MCF 10A (cell line): ENCODE measurements at regions of chr5 and their contacts with region 1.

Region 1: DNA sequence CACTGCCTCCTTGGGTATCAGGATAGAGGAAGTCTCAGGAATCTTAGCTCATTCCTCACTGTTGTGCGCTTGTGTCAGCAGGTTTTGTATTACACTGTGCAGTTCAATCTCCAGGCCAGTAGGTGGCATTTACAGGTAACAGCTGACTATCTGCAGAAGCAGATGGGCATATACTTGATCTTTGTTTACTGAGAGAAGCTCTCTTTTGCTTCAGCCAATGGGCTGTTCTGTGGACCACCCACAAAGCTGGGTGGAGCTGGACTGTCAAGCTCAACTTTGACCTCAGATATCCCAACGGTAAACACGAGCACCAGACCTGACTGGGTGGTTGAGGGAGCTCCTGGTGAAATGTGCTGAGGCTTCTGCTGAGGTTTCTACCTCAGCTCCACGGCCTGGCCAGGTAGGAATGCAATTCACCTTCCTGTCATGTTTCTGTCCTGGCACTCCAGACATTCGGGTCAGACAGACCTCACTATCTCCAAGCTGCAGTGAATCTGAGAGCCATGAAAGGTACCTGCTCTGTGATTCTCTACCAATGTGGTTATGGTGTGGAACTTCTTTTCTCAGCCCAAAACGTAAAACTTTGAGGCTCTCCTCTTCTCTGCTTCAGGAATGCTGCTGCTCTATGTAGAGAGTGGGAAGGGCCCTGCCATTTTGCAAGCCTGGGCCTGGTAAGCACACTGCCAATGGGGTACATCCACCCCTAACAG is 167.9 kb upstream of the ACTBL2 start:
- DNase-seq: peak; percentile 77
- H3K4me3 Mint-ChIP-seq: no peak overlapping the region
- H3K27ac Mint-ChIP-seq: no peak overlapping the region
- H3K4me1 Mint-ChIP-seq: no peaks in the 10 kb centered on the region
- H3K27me3 Mint-ChIP-seq: no peaks in the 10 kb centered on the region
- CTCF ChIP-seq: peak; percentile 75

Region 2: DNA sequence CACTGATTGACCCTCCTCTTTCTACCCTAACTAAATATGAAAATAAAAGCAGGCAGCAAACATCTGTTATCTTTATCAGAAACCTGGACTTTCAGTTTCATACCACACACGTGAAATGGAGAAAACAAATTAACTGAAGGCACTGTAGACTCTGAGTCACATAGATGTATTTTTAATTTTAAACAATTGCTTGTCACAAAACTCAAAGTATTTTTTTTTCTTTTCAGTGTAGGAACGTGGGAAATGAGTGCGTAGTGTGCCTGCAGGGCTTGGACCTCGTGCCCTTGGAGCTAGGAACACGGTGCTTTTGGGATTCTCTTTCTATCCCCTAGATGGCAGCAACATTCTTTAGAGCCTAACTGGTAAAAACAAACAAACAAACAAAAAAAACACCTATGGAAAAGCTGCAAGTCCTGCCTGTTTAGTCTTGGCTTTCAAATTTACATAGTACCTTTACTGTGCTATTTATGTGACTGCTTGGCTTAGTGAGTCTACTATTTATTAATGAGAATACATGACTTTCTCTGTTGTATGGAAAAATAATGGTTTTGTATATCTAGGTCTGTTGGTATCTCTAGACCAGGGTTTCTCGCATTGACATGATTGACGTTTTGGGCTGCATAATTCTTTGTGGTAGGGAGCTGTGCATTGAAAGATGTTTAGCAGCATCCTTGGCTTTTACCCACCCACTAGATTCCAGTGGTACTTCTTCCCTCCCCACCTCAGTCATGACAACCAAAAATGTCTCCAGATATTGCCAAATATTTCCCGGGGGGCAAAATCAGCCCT is 151.1 kb before region 1 on chr5:
- CTCF ChIA-PET with region 1: interaction called, 31 read pairs
- POLR2A ChIA-PET with region 1: no interaction called
- intact Hi-C with region 1: loop called (anchors 1 kb)
- DNase-seq: peak; percentile 69
- H3K4me3 Mint-ChIP-seq: peak overlapping the region; percentile 53
- H3K27ac Mint-ChIP-seq: no peak overlapping the region
- H3K4me1 Mint-ChIP-seq: peaks cover 21% of the 10 kb centered on the region
- H3K27me3 Mint-ChIP-seq: no peaks in the 10 kb centered on the region
- CTCF ChIP-seq: peak; percentile 63

Region 3: DNA sequence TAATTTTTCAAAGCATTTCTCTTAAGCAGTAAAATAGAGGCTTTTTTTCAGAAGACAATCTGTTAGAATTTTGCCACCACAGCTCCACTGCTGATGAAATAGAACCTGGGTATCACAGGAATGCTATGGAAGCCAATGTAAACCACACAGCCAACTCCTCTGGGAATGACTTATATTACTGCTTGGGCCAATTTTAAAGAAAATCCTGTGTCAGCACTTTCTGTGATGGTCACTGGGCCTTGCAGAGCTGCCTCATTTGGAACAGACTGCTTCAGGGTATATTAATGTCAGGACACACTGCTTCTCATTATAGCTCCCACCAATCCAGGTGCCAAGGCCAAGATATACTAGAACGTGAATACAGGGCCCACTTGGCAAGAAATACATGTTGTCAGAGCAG is 23.8 kb before region 1 on chr5:
- CTCF ChIA-PET with region 1: interaction called, 15 read pairs
- POLR2A ChIA-PET with region 1: no interaction called
- intact Hi-C with region 1: no loop called
- DNase-seq: peak; percentile 4
- H3K4me3 Mint-ChIP-seq: no peak overlapping the region
- H3K27ac Mint-ChIP-seq: no peak overlapping the region
- H3K4me1 Mint-ChIP-seq: no peaks in the 10 kb centered on the region
- H3K27me3 Mint-ChIP-seq: peaks cover 14% of the 10 kb centered on the region
- CTCF ChIP-seq: no peak

Region 4: GRCh38 chr5:57676222-57677098 is 25.9 kb after region 1 on chr5:
- CTCF ChIA-PET with region 1: interaction called, 15 read pairs
- POLR2A ChIA-PET with region 1: no interaction called
- intact Hi-C with region 1: no loop called
- DNase-seq: peak; percentile 36
- H3K4me3 Mint-ChIP-seq: no peak overlapping the region
- H3K27ac Mint-ChIP-seq: no peak overlapping the region
- H3K4me1 Mint-ChIP-seq: peaks cover 7% of the 10 kb centered on the region
- H3K27me3 Mint-ChIP-seq: no peaks in the 10 kb centered on the region
- CTCF ChIP-seq: no peak

Region 5: DNA sequence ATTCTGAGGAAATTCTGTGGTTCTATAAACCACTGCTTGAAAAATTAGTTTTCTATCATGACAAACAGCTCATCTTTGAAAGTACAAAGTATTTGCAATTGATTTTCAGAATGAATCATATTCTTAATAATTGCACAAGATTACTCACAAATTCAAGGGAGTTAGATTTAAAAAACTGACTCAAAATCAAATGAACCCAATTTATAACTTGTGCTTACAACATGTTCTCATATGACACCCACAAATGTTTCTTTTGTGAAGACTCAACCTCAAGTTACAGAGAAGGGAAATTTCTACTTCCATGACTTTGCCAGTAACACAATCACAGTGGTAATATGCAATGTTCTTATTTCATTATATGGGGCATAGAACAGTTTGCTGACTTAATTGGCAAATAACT is 104.1 kb after region 1 on chr5:
- CTCF ChIA-PET with region 1: interaction called, 7 read pairs
- POLR2A ChIA-PET with region 1: interaction called, 4 read pairs
- intact Hi-C with region 1: loop called (anchors 5 kb)
- DNase-seq: peak; percentile 18
- H3K4me3 Mint-ChIP-seq: no peak overlapping the region
- H3K27ac Mint-ChIP-seq: peak overlapping the region; percentile 14
- H3K4me1 Mint-ChIP-seq: peaks cover 14% of the 10 kb centered on the region
- H3K27me3 Mint-ChIP-seq: no peaks in the 10 kb centered on the region
- CTCF ChIP-seq: no peak

Region 6: DNA sequence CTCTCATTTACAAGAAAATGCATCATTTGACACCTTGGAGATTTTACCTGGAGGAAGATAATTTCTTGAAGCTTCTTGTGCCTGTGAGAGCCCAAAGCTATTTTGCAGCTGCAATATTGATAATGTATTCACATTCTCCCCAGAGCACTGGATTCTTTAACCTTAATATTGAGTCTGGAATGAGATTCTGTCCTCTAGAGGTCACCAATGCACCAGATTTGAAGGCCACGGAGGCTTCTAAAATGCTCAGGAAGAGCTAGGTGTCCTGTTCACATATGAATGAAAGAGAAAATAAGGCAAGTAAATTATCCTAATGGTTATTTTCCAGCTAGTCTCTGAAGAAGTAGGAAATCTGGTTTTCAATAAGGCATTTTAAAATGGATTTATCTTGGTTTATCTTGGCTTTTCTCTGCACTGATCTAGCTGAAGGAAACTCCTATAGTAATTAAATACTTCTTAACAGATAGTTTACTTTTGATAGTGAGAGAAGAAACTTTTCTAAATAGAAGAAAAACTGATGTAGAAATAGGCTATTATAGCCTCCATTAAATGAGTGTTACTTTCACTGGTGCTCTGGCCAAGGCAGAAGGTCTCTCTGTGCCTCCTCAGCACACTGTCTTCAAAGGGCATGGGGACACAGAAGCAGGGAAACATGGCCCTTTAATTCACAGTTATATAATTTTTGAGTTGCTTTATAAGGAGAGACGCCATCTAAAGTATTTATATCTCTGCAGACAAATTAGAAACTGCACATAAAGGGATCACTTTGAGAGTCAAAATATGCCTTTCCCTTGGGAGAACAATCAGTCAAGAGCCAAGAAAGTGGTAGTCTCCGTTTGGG is 129.1 kb after region 1 on chr5:
- CTCF ChIA-PET with region 1: interaction called, 68 read pairs
- POLR2A ChIA-PET with region 1: interaction called, 13 read pairs
- intact Hi-C with region 1: loop called (anchors 1 kb)
- DNase-seq: peak; percentile 78
- H3K4me3 Mint-ChIP-seq: no peak overlapping the region
- H3K27ac Mint-ChIP-seq: no peak overlapping the region
- H3K4me1 Mint-ChIP-seq: peaks cover 6% of the 10 kb centered on the region
- H3K27me3 Mint-ChIP-seq: no peaks in the 10 kb centered on the region
- CTCF ChIP-seq: peak; percentile 64

Region 7: DNA sequence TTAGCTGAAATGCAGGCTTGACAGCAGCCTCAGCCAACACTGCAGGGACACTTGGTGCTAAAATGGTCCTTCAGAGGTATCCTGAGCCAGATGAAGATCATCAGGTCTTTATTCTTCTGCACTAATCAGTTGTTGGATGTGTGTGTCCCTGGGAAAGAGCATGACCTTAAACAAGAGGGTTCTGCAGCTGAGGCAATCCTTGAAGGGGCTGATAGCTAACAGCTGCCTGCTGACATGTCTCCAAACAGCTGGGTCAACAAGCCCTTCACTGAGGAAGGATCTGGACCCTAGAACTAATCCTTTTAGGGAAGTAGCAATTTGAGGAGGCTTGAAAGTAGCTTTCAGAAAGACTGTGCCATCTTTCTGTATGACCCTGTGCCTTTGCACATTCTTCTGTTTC is 208.4 kb after region 1 on chr5:
- CTCF ChIA-PET with region 1: no interaction called
- POLR2A ChIA-PET with region 1: no interaction called
- intact Hi-C with region 1: no loop called
- DNase-seq: no peak
- H3K4me3 Mint-ChIP-seq: no peak overlapping the region
- H3K27ac Mint-ChIP-seq: no peak overlapping the region
- H3K4me1 Mint-ChIP-seq: peaks cover 21% of the 10 kb centered on the region
- H3K27me3 Mint-ChIP-seq: no peaks in the 10 kb centered on the region
- CTCF ChIP-seq: no peak

Region 8: DNA sequence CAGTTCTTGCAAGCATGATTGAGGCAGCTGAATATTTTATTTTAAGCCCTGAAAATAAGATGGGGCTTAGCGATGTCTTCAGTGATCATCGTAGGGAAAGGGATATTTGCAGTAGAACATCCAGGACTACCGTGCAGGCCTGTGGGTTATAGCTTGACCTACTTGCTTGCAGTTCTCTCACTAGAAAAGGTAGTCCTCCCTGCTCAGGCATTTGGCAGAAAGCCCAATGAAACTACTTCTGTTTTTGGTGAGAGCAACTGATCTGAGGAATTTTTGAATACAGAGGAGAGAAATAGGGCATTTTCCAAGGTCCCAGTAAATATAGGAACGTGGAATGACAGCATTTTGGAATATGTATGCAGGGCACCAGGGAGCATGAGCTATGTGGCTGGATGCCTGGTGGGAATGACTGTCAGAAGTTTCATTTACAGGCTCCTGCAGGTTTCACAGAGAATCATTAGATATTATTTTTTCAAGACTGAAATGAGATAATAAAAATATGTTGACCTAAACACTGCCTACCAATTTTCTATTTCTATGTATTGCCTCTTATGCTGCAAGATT is 249.9 kb after region 1 on chr5:
- CTCF ChIA-PET with region 1: no interaction called
- POLR2A ChIA-PET with region 1: no interaction called
- intact Hi-C with region 1: no loop called
- DNase-seq: no peak
- H3K4me3 Mint-ChIP-seq: no peak overlapping the region
- H3K27ac Mint-ChIP-seq: no peak overlapping the region
- H3K4me1 Mint-ChIP-seq: no peaks in the 10 kb centered on the region
- H3K27me3 Mint-ChIP-seq: no peaks in the 10 kb centered on the region
- CTCF ChIP-seq: no peak

Region 9: DNA sequence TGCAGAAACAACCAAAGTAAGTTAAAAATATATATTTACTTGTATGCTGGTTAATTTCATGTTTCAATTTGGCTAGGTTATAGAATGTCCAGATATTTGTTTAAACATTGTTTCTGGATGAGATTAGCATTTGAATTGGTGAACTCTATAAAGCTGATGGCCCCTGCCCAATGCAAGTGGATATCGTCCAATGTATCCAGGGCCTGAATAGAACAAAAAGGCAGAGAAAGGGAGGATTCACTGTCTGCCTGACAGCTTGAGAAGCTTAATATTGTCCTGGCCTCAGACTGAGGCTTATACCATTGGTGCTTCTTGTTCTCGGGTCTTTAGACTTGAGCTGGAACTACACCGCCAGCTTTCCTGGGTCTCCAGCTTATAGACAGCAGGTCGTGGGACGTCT is 278.8 kb after region 1 on chr5:
- CTCF ChIA-PET with region 1: no interaction called
- POLR2A ChIA-PET with region 1: no interaction called
- intact Hi-C with region 1: no loop called
- DNase-seq: no peak
- H3K4me3 Mint-ChIP-seq: no peak overlapping the region
- H3K27ac Mint-ChIP-seq: no peak overlapping the region
- H3K4me1 Mint-ChIP-seq: peaks cover 12% of the 10 kb centered on the region
- H3K27me3 Mint-ChIP-seq: no peaks in the 10 kb centered on the region
- CTCF ChIP-seq: no peak